ENCODE measurements at regions of chr12 and their contacts with region 1.

Region 1: DNA sequence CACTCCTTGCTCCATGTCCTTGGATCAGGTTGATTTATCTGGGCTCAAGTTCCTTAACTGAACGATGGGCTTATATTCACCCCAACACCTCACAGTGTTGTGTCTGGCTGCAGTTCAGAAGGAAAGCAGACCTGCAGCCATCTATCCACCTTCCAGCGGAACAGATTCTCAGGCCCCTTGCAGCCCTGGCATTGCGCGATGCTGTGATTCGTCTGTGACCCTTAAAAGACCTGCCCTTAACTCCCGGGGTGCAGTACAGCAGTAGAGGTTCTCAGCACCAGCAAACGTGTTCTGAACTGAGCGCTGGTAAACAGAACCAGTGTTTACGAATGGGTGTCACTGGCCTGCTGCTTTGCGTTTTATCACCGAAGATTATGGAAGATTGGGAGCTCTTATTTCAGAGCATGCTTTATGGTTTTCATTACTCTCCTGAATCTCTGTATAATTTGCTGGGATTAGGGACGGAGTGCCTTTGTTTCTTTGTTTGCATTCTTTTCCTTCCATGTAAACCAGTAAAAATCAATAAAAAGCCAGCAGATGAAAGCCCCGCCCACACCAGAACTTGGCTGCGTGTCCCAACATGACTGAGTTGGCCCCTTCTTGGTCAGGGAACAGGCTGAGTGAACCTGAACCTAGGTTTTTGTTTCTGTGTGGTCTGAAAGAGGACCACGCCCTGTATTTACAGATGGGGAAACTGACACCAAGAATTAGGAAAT is 286.7 kb upstream of the CRY1 start:
- DNase-seq: no peak
- ATAC-seq: no peak
- H3K4me3 ChIP-seq: no peak overlapping the region
- H3K4me3 Mint-ChIP-seq: no peak overlapping the region
- H3K27ac ChIP-seq: no peak overlapping the region
- H3K27ac Mint-ChIP-seq: no peak overlapping the region
- H3K4me1 ChIP-seq: no peaks in the 10 kb centered on the region
- H3K4me1 Mint-ChIP-seq: peaks cover 5 to 21% of the 10 kb centered on the region in 2 donors
- H3K27me3 ChIP-seq: no peaks in the 10 kb centered on the region
- H3K27me3 Mint-ChIP-seq: no peaks in the 10 kb centered on the region
- CTCF ChIP-seq: no peak

Region 2: GRCh38 chr12:107296681-107297089 is 83.3 kb before region 1 on chr12:
- intact Hi-C with region 1: no loop called
- DNase-seq: no peak
- ATAC-seq: no peak
- H3K4me3 ChIP-seq: no peak overlapping the region
- H3K4me3 Mint-ChIP-seq: no peak overlapping the region
- H3K27ac ChIP-seq: no peak overlapping the region
- H3K27ac Mint-ChIP-seq: no peak overlapping the region
- H3K4me1 ChIP-seq: no peaks in the 10 kb centered on the region
- H3K4me1 Mint-ChIP-seq: peaks cover 7% of the 10 kb centered on the region in 2 donors
- H3K27me3 ChIP-seq: no peaks in the 10 kb centered on the region
- H3K27me3 Mint-ChIP-seq: peaks cover 14 to 19% of the 10 kb centered on the region in 2 donors
- CTCF ChIP-seq: no peak

Region 3: GRCh38 chr12:107349008-107349747 is 30.8 kb before region 1 on chr12:
- intact Hi-C with region 1: loop called (anchors 5 kb)
- DNase-seq: no peak
- ATAC-seq: no peak
- H3K4me3 ChIP-seq: no peak overlapping the region
- H3K4me3 Mint-ChIP-seq: no peak overlapping the region
- H3K27ac ChIP-seq: no peak overlapping the region
- H3K27ac Mint-ChIP-seq: no peak overlapping the region
- H3K4me1 ChIP-seq: peaks cover 13% of the 10 kb centered on the region
- H3K4me1 Mint-ChIP-seq: peaks cover 32 to 37% of the 10 kb centered on the region in 2 donors
- H3K27me3 ChIP-seq: no peaks in the 10 kb centered on the region
- H3K27me3 Mint-ChIP-seq: no peaks in the 10 kb centered on the region
- CTCF ChIP-seq: no peak

Region 4: GRCh38 chr12:107359342-107359741 is 20.7 kb before region 1 on chr12:
- intact Hi-C with region 1: no loop called
- DNase-seq: no peak
- ATAC-seq: no peak
- H3K4me3 ChIP-seq: no peak overlapping the region
- H3K4me3 Mint-ChIP-seq: no peak overlapping the region
- H3K27ac ChIP-seq: no peak overlapping the region
- H3K27ac Mint-ChIP-seq: no peak overlapping the region
- H3K4me1 ChIP-seq: no peaks in the 10 kb centered on the region
- H3K4me1 Mint-ChIP-seq: peaks cover 7 to 16% of the 10 kb centered on the region in 2 donors
- H3K27me3 ChIP-seq: no peaks in the 10 kb centered on the region
- H3K27me3 Mint-ChIP-seq: no peaks in the 10 kb centered on the region
- CTCF ChIP-seq: no peak

Measured in natural killer cell (primary cell).